ENCODE measurements at regions of chr16 and their contacts with region 1.

Region 1: DNA sequence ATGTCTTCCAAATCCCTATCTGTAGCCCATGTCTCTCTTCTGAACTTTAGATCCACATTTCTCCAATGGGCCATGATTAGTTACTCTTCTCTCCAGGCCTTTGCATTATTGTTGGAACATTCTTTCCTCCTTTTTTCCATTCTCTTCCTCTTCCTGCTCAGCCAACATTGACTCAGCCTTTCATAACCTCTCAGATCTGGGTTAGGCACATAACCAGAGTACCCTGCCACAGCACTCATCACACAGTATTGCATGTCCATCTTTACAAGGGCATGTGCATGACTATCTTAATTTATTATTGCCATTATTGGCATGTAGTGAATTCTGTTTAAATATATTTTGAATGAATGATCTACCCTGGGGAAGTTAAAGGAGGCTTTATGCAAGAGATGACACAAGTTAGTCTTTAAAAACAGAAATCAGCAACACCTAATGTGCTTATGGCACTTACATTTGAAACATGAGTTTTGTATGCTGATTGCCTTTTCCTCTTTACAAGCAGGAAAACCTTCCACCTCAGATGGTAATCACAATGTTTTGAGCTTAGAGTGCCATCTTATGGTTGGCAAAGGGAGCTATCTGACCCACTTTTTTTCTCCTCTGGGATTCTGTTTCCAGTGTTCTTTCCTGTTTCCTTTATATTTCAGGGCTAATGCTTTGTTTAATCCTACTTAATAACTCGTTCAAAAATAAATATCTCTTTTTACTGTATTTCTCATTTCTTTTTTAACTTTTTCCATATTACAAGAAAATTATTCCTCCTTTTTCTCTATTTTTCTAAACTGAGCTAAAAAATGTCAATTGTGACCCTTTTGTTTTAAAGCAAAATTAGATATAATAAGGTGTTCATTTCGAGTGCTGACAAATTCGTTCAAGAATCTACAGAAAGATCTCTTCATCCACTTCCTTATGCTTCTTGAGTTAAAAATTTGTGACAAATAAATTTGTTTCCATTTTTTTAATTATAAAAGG is 151.0 kb upstream of the RBL2 start:
- DNase-seq: no peak
- H3K4me3 Mint-ChIP-seq: no peak overlapping the region
- H3K27ac Mint-ChIP-seq: no peak overlapping the region
- H3K4me1 Mint-ChIP-seq: no peaks in the 10 kb centered on the region
- H3K27me3 Mint-ChIP-seq: no peaks in the 10 kb centered on the region

Region 2: GRCh38 chr16:52191531-52192134 is 1091.6 kb before region 1 on chr16:
- intact Hi-C with region 1: loop called (anchors 2 kb)
- DNase-seq: peak; percentile 11
- H3K4me3 Mint-ChIP-seq: no peak overlapping the region
- H3K27ac Mint-ChIP-seq: no peak overlapping the region
- H3K4me1 Mint-ChIP-seq: no peaks in the 10 kb centered on the region
- H3K27me3 Mint-ChIP-seq: no peaks in the 10 kb centered on the region

Region 3: DNA sequence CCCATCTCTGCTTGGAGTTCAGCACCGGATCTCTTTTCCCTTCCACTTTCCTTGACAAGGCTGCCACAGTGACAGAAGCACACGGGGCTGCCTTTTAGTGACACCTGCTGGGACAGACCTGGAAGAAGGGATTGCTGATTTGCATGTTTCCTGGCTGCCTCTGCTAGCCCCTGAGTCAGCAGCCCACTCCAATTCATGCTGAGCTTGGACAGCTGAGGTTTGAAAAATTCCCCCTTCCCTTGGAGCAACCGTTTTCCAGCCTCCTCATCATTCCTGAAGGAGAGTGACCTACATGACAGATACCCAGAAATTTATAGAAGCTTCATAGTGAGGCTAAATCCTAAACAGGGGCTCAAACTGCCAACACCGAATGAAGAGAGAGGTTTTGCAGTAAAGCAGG is 132.2 kb after region 1 on chr16:
- intact Hi-C with region 1: no loop called
- DNase-seq: no peak
- H3K4me3 Mint-ChIP-seq: no peak overlapping the region
- H3K27ac Mint-ChIP-seq: no peak overlapping the region
- H3K4me1 Mint-ChIP-seq: no peaks in the 10 kb centered on the region
- H3K27me3 Mint-ChIP-seq: peaks cover 2% of the 10 kb centered on the region